WTC11 (cell line): ENCODE measurements at regions of chr6 and their contacts with region 1.

Region 1: DNA sequence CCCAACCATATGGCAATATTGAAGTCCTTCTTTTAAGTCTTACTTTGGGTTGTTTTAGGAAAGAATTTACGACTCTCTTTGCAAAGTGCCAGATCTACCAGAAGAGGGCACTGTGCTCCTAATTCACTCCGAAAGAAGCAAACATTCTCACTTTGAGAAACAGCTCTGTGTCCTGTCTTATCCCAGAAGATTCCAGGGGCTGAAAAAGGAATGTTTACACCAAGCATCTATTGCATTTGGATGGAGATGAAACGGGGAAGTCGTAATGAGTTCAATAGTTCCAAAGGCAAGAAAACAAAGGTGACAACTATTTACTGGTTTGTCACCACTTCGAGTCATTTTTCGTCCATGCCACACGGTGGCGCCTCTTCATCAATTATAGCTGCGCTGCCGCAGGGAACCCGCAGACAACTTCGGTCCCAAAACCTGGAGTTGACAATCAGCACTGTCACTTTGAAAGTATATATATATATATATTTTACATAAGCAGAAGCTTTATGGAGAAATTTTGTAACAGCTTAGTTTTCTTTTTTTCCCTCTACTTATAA is 121.6 kb downstream of the MOXD1 start:
- DNase-seq: peak; percentile 73
- ATAC-seq: peak; percentile 61
- H3K4me3 Mint-ChIP-seq: peak overlapping the region; percentile 80
- H3K27ac Mint-ChIP-seq: 0 out of 2 replicates have a peak overlapping the region, but pooled peaks have one; percentile 78
- H3K4me1 Mint-ChIP-seq: peaks cover 10% of the 10 kb centered on the region
- H3K27me3 Mint-ChIP-seq: peaks cover 9% of the 10 kb centered on the region
- CTCF ChIP-seq: peak; percentile 83

Region 2: GRCh38 chr6:131949909-131950766 is 329.5 kb before region 1 on chr6:
- CTCF ChIA-PET with region 1: interaction called, 11 read pairs
- POLR2A ChIA-PET with region 1: no interaction called
- DNase-seq: peak; percentile 85
- ATAC-seq: peak; percentile 43
- H3K4me3 Mint-ChIP-seq: peak overlapping the region; percentile 82
- H3K27ac Mint-ChIP-seq: peak overlapping the region; percentile 51; the same call in 1 of the 2 replicates
- H3K4me1 Mint-ChIP-seq: peaks cover 81% of the 10 kb centered on the region
- H3K27me3 Mint-ChIP-seq: no peaks in the 10 kb centered on the region
- CTCF ChIP-seq: peak; percentile 39; the same call in 1 of the 2 replicates

Region 3: DNA sequence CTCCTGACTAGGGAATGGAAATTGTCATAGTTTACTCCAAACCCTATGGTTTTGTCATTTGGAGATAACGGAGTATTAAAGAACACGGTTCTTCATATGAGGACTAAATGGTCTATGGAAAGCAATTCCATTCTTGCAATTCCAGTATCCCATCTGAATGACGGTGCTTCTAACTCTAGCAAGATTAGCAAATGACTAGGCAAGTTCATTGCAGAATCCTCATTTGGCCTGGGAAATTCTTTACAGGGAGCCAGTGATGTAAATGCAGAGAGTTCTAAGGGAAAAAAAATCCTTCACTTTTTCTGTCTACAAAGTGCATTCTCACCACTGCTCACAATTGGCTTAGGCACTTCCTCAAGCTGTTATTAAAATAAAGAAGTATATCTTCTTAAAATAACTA is 10.1 kb after region 1 on chr6:
- CTCF ChIA-PET with region 1: interaction called, 77 read pairs
- POLR2A ChIA-PET with region 1: no interaction called
- DNase-seq: no peak
- ATAC-seq: no peak
- H3K4me3 Mint-ChIP-seq: no peak overlapping the region
- H3K27ac Mint-ChIP-seq: no peak overlapping the region
- H3K4me1 Mint-ChIP-seq: 0 out of 2 replicates have a peak, but pooled peaks cover 3% of the 10 kb centered on the region
- H3K27me3 Mint-ChIP-seq: no peaks in the 10 kb centered on the region
- CTCF ChIP-seq: no peak

Region 4: GRCh38 chr6:132391391-132392271 is 112.0 kb after region 1 on chr6:
- CTCF ChIA-PET with region 1: interaction called, 38 read pairs
- POLR2A ChIA-PET with region 1: no interaction called
- DNase-seq: no peak
- ATAC-seq: peak; percentile 24
- H3K4me3 Mint-ChIP-seq: no peak overlapping the region
- H3K27ac Mint-ChIP-seq: 0 out of 2 replicates have a peak overlapping the region, but pooled peaks have one; percentile 11
- H3K4me1 Mint-ChIP-seq: peaks cover 20% of the 10 kb centered on the region
- H3K27me3 Mint-ChIP-seq: peaks cover 8% of the 10 kb centered on the region
- CTCF ChIP-seq: no peak

Region 5: DNA sequence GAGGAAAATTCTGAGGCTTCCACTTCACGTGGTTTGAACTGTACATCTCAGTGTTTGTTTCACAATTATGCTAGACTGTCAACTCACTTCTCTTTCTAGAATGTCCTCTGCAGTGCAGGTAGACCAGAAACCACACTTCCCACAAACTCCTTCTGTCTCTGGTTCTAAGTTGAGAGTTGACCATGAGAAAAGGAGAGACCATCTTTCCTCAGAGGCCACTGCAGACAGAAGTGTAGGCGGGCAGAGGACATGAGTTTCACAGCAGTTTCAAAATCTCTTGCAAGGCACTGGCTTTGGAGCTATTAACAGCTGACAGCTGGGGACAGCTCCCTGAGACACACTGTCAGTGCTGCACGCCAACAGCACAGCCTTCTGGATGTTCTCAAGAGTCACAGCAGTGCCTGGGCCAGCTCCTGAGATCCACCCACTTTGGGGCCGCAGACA is 177.1 kb after region 1 on chr6:
- CTCF ChIA-PET with region 1: interaction called, 10 read pairs
- POLR2A ChIA-PET with region 1: no interaction called
- DNase-seq: no peak
- ATAC-seq: peak; percentile 60; the same call in 1 of the 2 replicates
- H3K4me3 Mint-ChIP-seq: no peak overlapping the region
- H3K27ac Mint-ChIP-seq: no peak overlapping the region
- H3K4me1 Mint-ChIP-seq: no peaks in the 10 kb centered on the region
- H3K27me3 Mint-ChIP-seq: no peaks in the 10 kb centered on the region
- CTCF ChIP-seq: no peak

Region 6: DNA sequence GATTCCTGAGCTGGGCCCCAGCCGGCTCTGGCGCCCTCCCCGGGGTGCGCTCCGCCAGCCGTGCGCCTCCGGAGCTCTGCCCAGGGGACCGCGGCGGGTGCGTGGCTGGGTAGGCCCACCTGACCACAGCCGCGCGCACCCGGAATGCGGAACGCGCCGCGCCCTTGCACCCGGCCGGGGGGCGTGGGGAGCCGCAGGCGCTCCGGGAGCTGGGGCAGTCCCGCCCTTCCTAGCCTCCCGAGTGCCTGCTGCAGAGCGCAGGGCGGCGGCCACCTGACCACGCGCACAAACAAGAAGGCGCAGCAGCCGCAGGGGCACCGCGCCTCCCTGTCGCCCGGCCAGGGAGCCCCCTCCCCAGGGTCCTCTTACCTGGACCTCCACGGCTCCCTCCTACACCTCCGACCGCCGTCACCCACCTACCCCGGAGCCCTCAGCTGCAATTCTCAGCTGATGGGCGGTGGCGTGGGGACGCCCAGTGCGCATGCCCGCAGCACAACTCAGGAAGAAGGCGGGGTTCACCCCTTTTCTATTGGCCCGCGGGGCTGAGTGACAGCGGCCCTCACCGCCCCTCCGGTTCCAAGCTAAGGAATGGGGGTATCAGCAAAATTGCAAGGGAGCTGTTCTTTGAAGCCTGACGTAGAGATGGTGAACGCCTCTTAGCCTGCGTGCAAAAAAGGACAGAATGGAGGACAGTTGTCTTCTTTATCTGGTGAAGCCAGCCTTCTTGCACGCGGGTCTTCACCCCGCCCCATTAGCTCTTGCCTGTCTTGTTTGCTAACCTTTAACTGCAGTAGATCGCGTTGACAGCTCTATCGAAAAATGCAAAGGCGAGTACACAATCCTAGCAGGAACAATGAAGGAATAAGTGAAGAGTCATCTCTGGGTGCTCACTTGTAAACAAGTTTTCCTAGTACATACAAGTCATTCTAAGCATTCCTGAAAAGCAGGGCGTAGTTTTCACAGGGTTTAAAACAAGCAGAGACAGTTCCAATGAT is 233.3 kb after region 1 on chr6 and contains the start of gene STX7:
- CTCF ChIA-PET with region 1: interaction called, 12 read pairs
- POLR2A ChIA-PET with region 1: no interaction called
- DNase-seq: peak; percentile 90
- ATAC-seq: peak; percentile 96
- H3K4me3 Mint-ChIP-seq: peak within 1 kb of the TSS; percentile 92
- H3K27ac Mint-ChIP-seq: no peak within 1 kb of the TSS; the same call in 1 of the 2 replicates
- H3K4me1 Mint-ChIP-seq: peaks cover 22% of the 10 kb centered on the region
- H3K27me3 Mint-ChIP-seq: peaks cover 18% of the 10 kb centered on the region
- CTCF ChIP-seq: no peak
- total RNA-seq, gene STX7: 25.6 to 30.4 TPM (median 26.5 TPM) in 3 replicates